AG04449 (cell line): ENCODE measurements at regions of chr1 and their contacts with region 1.

Region 1: DNA sequence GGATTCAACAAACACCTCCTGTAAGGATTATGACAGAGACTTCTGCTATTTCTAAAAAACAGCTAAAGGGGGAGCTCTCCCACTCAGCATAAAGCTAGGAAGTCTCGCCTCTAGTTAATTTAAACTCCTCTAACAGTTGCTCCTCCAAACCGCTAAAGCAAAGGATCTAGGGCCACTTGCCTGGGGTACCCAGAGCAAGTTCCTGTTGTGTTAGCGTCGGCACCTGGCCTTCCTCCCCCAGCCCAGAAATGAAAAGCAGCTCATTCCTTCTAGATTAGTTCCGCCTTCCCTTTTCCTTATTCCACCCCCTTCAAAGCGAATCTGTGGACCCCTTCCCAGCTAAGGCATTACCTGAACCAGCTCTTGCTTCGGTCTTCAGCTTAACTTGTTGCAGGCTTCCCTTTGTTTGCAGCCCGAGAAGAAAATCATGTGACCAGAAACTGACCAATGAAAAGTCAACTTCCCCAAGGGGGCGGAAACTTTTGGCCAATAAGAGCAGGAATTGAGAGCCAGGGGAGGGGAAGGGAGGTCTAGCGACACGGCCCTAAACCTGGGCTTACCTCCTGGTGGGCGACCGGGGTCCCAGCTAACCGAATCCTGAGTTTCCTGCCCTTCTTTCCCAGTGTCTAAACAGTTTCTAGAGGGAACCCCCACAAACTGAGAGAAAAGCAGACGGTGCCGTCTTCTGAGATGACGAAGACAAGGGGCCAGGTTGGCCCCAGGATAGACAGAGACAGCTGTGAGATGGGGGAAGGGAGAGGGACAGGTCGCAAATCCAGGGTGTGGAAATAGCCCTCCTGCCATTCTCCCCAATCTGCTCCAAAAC is at the start of gene PBXIP1:
- DNase-seq: peak; percentile 50
- H3K4me3 ChIP-seq: peak within 1 kb of the TSS; percentile 66
- CTCF ChIP-seq: peak; percentile 31

Region 2: GRCh38 chr1:154911691-154912550 is 44.0 kb before region 1 on chr1:
- CTCF ChIA-PET with region 1: no interaction called
- POLR2A ChIA-PET with region 1: no interaction called
- DNase-seq: no peak
- H3K4me3 ChIP-seq: no peak overlapping the region
- CTCF ChIP-seq: no peak

Region 3: GRCh38 chr1:154943649-154944400 is 12.1 kb before region 1 on chr1:
- CTCF ChIA-PET with region 1: interaction called, 18 read pairs
- POLR2A ChIA-PET with region 1: no interaction called
- DNase-seq: no peak
- H3K4me3 ChIP-seq: no peak overlapping the region
- CTCF ChIP-seq: peak; percentile 79

Region 4: DNA sequence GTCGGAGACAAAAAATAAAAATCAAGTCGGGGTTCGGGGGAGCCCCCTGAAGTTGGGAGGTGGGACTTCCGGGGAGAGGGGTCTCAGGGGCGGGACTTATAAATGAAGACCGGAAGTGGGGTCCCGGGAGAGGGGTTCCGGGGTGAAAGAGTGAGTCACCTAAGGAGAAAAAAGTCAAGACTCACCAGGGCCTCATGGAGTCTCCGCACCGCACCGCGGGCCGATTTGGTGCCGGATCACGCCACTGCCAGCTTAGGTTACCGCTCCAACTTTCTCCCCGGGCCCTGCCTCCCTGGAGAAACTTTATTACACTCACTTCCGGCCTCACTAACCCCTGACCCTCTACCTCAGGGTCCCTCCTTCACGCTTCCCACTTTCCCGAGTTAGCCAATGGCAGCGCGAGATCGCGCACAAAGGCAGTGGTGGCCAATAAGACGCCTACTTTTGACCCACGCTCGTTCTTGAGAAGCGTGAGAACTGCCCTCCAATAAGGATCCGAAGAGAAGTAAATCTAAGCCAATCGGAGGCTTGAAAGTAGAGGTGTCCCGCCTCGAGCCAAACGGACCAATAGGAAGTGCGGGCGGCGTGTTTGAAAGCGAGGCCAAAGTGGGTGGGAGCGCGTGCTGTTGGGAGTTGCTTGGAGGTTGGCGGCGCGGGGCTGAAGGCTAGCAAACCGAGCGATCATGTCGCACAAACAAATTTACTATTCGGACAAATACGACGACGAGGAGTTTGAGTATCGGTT is 18.3 kb after region 1 on chr1 and contains the start of gene CKS1B:
- CTCF ChIA-PET with region 1: interaction called, 47 read pairs
- POLR2A ChIA-PET with region 1: interaction called, 74 read pairs
- DNase-seq: peak; percentile 100
- H3K4me3 ChIP-seq: peak within 1 kb of the TSS; percentile 75
- CTCF ChIP-seq: no peak

Region 5: DNA sequence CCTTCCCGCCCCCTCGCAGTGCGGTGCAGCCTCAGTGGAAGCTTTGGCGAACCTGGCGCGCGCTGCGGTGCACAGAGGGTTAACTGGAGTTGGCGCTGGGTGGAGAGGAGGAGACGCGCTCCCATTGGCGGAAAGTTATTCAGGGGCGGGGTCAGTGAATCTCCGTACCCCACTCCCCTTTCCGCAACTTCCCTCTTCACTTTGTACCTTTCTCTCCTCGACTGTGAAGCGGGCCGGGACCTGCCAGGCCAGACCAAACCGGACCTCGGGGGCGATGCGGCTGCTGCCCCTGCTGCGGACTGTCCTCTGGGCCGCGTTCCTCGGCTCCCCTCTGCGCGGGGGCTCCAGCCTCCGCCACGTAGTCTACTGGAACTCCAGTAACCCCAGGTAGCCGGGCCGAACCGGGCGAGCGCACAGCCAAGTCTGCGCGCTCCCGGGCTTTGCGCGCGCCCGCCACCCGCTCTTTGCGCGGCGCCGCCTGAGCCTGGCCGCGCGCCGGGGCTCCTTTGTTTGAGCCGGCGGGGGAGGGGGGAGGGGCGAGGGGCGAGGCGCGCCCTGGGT is 107.7 kb after region 1 on chr1 and contains the start of gene EFNA4:
- CTCF ChIA-PET with region 1: interaction called, 33 read pairs
- POLR2A ChIA-PET with region 1: no interaction called
- DNase-seq: no peak
- H3K4me3 ChIP-seq: peak within 1 kb of the TSS; percentile 96
- CTCF ChIP-seq: no peak